ENCODE measurements at regions of chr16 and their contacts with region 1.

Region 1: GRCh38 chr16:19502395-19503131 is 19.3 kb downstream of the GDE1 start:
- DNase-seq: peak; percentile 74 to 86
- H3K4me3 ChIP-seq: no peak overlapping the region
- H3K27ac ChIP-seq: no peak overlapping the region
- H3K4me1 ChIP-seq: peaks cover 14 to 17% of the 10 kb centered on the region in 2 donors
- H3K27me3 ChIP-seq: no peaks in the 10 kb centered on the region
- CTCF ChIP-seq: peak; percentile 53 to 78 (median 66)
- POLR2A ChIP-seq: no peak

Region 2: GRCh38 chr16:19167710-19168370 is 334.7 kb before region 1 on chr16 and contains the start of gene SYT17:
- intact Hi-C with region 1: loop called (anchors 10 kb)
- DNase-seq: peak; percentile 68 to 74
- H3K4me3 ChIP-seq: peak within 1 kb of the TSS in 2 of 3 donors; percentile 54 to 76
- H3K27ac ChIP-seq: peak within 1 kb of the TSS in 2 of 3 donors; percentile 56 to 77
- H3K4me1 ChIP-seq: peaks cover 9 to 10% of the 10 kb centered on the region in 2 donors
- H3K27me3 ChIP-seq: no peaks in the 10 kb centered on the region
- CTCF ChIP-seq: peak; percentile 26 to 92 (median 58)
- POLR2A ChIP-seq: no peak
- total RNA-seq, gene SYT17: 2.8 to 17.2 (median 8.6) TPM

Region 3: DNA sequence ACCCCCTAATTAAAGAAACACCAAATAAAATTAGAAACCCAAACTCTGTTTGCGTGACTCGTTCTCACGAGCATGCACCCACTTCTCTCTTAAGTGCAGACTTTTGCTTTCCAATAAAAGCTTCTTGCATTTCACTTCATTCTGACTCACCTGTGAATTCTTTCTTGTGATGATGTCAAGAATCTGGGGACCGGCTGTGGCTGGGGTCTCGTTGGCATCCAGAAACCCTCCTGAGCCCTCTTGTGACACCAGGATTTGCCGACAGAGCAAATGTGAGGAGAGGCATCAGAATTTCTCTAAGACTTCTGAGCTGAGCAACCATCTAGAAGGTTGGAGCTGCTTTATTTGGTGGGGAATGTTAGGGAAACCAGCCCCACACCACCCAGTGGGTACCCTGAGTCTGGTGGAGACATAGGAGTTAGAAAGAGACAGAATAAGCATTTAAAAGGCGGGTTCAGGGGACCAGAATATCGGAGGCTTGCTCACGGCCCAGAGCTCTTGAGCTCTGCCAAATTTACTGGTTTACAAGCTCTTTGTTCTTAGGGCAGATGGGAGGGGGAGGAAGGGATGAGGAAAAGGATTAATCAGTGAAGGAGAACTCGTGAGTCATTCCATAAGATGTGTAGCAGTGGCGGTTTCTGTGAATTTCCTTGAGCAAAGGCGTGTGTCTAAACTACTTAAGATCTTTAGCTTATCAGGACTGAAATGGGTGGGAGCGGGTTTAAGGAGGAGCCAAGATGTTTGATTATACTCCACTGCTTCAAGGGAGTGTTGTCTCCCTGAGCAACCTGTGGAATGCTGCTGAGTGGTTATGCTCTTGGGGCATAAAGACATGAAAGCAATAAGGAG is 109.1 kb before region 1 on chr16:
- intact Hi-C with region 1: loop called (anchors 5 kb)
- DNase-seq: peak; percentile 30 to 53
- H3K4me3 ChIP-seq: no peak overlapping the region
- H3K27ac ChIP-seq: peak overlapping the region; percentile 6 to 71 (median 58)
- H3K4me1 ChIP-seq: peaks cover 23 to 33% of the 10 kb centered on the region in 2 donors
- H3K27me3 ChIP-seq: no peaks in the 10 kb centered on the region
- CTCF ChIP-seq: no peak
- POLR2A ChIP-seq: no peak

Measured in thyroid gland (tissue), 4 donors.